ENCODE measurements at regions of chr11 and their contacts with region 1.

Region 1: GRCh38 chr11:2151500-2152257 is 9.3 kb downstream of the INS start:
- DNase-seq: peak; percentile 88
- H3K4me3 Mint-ChIP-seq: no peak overlapping the region
- H3K27ac Mint-ChIP-seq: no peak overlapping the region
- H3K4me1 Mint-ChIP-seq: peaks cover 5% of the 10 kb centered on the region
- H3K27me3 Mint-ChIP-seq: peaks cover 33% of the 10 kb centered on the region

Region 2: GRCh38 chr11:1652771-1653540 is 498.7 kb before region 1 on chr11:
- CTCF ChIA-PET with region 1: interaction called, 5 read pairs
- intact Hi-C with region 1: loop called (anchors 10 kb)
- DNase-seq: peak; percentile 74
- H3K4me3 Mint-ChIP-seq: no peak overlapping the region
- H3K27ac Mint-ChIP-seq: no peak overlapping the region
- H3K4me1 Mint-ChIP-seq: no peaks in the 10 kb centered on the region
- H3K27me3 Mint-ChIP-seq: peaks cover 9% of the 10 kb centered on the region

Region 3: DNA sequence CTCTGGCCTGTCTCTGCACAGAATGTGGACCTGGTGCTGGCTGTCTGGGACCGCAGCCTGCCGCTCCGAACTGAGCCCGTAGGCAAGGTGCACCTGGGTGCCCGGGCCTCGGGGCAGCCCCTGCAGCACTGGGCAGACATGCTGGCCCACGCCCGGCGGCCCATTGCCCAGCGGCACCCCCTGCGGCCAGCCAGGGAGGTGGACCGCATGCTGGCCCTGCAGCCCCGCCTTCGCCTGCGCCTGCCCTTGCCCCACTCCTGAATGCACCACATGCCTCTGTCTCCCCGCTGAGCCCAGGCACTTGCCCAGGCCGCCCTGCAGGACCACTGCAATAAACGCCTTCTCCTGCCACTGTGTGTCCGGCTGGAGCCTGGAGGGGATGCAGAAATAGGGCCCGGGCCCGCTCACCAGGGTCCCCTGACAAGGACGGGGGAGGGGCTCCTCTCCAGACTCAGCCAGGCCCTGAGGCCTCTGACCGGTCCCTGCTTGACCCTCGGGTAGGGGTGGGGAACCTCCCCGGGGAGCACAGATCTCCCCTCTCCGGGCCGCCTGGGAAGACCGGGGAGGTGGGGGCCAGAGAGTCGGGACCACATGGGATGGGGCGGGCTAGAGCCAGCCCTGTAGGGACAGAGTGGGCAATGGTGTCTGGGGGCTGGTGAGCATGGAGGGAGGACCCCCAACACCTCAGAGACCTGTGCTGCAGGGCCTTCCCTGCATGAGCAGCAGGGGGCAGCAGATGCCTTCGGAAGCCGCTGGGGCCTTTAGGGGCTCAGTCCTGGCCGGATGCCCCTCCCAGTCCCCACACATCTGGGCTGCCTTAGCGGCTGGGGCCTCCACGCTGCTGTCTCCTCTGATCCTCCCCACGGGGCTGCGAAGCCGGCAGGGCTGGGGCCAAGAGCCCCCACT is 314.3 kb before region 1 on chr11:
- CTCF ChIA-PET with region 1: interaction called, 24 read pairs
- intact Hi-C with region 1: loop called (anchors 1 kb)
- DNase-seq: peak; percentile 77
- H3K4me3 Mint-ChIP-seq: no peak overlapping the region
- H3K27ac Mint-ChIP-seq: no peak overlapping the region
- H3K4me1 Mint-ChIP-seq: no peaks in the 10 kb centered on the region
- H3K27me3 Mint-ChIP-seq: no peaks in the 10 kb centered on the region

Region 4: DNA sequence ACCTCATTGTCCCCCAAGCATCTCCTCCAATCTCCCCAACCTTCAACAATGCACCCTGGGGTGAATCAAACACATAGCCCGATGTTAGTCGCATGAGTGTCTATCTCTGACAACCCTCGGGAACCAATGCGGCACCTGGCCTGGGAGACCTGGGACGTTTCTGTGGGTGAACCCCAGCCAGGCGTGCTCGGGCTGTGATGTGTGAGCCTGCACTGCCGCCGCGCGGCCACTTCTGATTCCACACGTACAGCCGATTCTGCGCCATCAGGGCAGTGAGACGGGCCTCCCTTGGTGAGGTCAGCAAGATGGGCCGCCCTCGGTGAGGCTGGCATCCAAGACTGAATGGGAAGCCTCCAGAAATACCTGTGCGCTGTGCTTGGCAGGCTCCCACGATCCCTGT is 148.9 kb before region 1 on chr11:
- CTCF ChIA-PET with region 1: interaction called, 31 read pairs
- intact Hi-C with region 1: no loop called
- DNase-seq: no peak
- H3K4me3 Mint-ChIP-seq: no peak overlapping the region
- H3K27ac Mint-ChIP-seq: no peak overlapping the region
- H3K4me1 Mint-ChIP-seq: no peaks in the 10 kb centered on the region
- H3K27me3 Mint-ChIP-seq: no peaks in the 10 kb centered on the region

Region 5: GRCh38 chr11:2036863-2037486 is 114.7 kb before region 1 on chr11:
- CTCF ChIA-PET with region 1: interaction called, 370 read pairs
- intact Hi-C with region 1: no loop called
- DNase-seq: no peak
- H3K4me3 Mint-ChIP-seq: no peak overlapping the region
- H3K27ac Mint-ChIP-seq: no peak overlapping the region
- H3K4me1 Mint-ChIP-seq: no peaks in the 10 kb centered on the region
- H3K27me3 Mint-ChIP-seq: no peaks in the 10 kb centered on the region

Region 6: DNA sequence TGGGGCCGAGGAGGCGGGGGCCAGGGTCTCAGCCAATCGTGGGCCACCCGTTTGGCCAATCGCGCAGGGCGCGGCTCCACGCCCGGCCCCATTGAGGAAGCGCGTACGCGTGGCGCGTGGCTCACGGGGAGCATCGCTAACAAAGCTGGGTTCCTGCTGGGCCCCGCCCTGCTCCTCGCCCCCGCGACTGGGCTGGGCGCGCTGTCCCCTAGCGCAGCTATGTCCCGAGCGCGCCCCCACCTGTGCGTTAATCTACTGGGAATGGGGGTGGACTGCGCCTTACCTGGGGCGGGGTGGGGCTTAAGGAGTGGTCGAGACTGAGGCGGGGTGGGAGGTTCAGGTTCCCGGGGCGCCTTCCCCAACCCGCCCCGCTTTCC is 119.4 kb after region 1 on chr11:
- CTCF ChIA-PET with region 1: no interaction called
- intact Hi-C with region 1: no loop called
- DNase-seq: no peak
- H3K4me3 Mint-ChIP-seq: no peak overlapping the region
- H3K27ac Mint-ChIP-seq: no peak overlapping the region
- H3K4me1 Mint-ChIP-seq: peaks cover 16% of the 10 kb centered on the region
- H3K27me3 Mint-ChIP-seq: peaks cover 25% of the 10 kb centered on the region

Region 7: DNA sequence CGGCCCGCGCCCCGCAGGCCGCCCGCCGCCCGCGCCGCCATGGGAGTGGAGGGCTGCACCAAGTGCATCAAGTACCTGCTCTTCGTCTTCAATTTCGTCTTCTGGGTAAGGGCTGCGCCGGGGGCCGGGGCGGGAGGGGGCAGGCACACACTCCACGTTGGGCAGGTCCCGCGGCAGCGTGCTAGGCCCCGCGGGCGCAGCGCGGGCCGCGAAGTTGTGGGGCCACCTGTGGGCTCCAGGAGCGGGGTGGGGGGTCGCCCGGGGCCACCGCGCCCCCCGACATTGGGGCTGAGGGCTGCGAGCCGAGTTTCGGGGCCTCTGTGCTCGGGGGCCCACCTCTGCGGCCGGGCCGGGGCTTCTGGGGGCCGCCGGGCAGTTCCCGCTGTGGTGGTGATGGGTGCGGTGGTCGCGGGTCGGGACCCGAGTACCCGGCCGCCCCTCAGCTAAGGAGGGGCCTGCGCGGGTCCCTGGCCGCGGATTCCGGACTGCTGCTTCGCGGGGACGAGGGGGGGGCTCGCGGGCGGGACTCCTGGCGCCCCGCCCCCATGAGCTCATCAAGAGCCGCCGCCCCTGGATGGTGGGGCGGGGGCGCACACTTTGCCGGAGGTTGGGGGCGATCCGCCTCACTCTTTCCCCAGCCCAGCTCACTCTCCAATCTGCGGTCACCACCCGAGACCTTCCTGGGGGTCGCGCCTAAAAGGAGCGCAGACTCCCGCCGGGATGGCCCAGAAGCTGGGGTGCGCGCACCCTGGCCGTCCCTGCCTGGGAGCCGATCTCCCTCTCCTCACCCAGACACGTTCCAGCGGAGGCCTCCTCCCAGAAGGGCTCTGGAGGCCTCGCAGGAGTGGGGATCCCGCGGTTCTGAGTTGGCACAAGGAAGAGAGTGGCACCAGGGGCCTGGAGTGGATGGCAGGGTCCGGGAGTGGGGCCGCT is 226.1 kb after region 1 on chr11:
- CTCF ChIA-PET with region 1: no interaction called
- intact Hi-C with region 1: no loop called
- DNase-seq: peak; percentile 56
- H3K4me3 Mint-ChIP-seq: peak overlapping the region; percentile 84
- H3K27ac Mint-ChIP-seq: peak overlapping the region; percentile 79
- H3K4me1 Mint-ChIP-seq: peaks cover 32% of the 10 kb centered on the region
- H3K27me3 Mint-ChIP-seq: no peaks in the 10 kb centered on the region

Measured in activated naive CD4-positive, alpha-beta T cell treated with anti-CD3 and anti-CD28 coated beads for 36 hours (primary cell).